Prostate gland (tissue), 2 donors: ENCODE measurements at regions of chr4 and their contacts with region 1.

Region 1: DNA sequence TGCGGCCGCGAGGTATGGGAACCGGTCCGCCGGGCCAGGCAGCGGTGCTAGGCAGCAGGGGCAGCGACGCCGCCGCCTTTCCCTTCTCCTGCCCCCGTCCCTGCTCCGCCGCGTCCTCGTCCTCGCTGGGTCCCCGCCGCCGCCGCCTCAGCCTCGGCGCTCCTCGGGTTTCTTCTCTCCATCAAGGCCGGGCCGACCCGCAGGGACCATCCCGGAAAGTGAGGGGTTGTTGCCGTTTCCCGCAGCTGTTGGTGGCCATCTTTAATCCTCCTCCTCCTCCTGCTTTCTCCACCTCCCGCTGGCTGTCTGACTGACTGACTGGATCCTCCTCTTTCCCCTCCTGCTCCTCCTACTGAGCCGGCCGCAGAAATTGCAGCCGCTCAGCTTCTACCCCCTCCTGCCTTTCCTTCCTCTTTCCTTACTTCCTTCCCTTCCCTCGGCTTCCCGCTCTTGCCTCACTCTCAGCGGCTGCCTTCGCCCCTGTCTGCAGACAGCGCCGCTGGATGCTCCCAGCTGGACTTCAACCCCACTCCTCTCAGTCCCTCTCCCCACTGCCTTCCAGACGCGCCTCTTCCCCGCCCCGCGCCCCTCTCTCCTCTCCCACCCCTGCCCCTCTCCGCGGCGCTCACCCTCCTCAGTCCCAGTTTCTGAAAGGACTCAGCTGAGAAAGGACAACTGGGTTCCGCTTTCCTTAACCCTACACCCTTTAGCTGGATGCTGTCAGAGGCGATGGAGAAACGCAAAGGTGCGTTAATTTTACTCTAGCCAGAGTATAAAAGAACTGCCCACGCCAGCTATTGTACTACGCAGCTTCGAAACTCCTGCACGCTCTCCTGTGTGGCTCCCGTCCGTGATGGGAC is at the start of gene WDFY3:
- DNase-seq: peak; percentile 86
- H3K4me3 ChIP-seq: peak within 1 kb of the TSS; percentile 69 to 80
- H3K27ac ChIP-seq: peak within 1 kb of the TSS; percentile 90 to 93
- H3K4me1 ChIP-seq: no peaks in the 10 kb centered on the region
- H3K27me3 ChIP-seq: no peaks in the 10 kb centered on the region
- CTCF ChIP-seq: no peak
- POLR2A ChIP-seq: peak; percentile 81
- total RNA-seq, gene WDFY3: 48.1 to 110 TPM

Region 2: GRCh38 chr4:84578540-84579402 is 387.8 kb before region 1 on chr4:
- intact Hi-C with region 1: loop called (anchors 5 kb)
- DNase-seq: peak; percentile 21
- H3K4me3 ChIP-seq: no peak overlapping the region
- H3K27ac ChIP-seq: no peak overlapping the region
- H3K4me1 ChIP-seq: no peaks in the 10 kb centered on the region
- H3K27me3 ChIP-seq: no peaks in the 10 kb centered on the region
- CTCF ChIP-seq: peak in 3 of 4 experiments; percentile 40 to 43 (median 42)
- POLR2A ChIP-seq: no peak

Region 3: DNA sequence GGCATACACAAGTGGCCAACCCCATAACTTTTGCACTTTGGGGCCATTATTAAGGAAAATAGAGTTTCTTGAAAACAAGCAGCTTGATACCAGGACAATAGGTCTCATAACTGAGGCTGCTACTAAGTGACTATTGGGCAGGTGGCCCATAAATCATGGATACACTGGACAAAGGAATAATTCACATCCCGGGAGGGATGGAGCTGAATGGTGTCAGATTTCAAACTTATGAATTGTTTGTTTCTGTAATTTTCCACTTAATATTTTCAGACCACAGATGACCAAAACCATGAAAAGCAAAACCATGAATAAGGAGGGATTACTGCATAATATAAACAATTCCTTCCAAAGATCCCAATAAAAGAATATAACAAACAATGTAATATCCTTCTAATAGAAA is 114.5 kb before region 1 on chr4:
- intact Hi-C with region 1: loop called (anchors 5 kb)
- DNase-seq: no peak
- H3K4me3 ChIP-seq: no peak overlapping the region
- H3K27ac ChIP-seq: no peak overlapping the region
- H3K4me1 ChIP-seq: no peaks in the 10 kb centered on the region
- H3K27me3 ChIP-seq: no peaks in the 10 kb centered on the region
- CTCF ChIP-seq: no peak
- POLR2A ChIP-seq: no peak